Activated CD4-positive, alpha-beta memory T cell treated with anti-CD3 and anti-CD28 coated beads, Interleukin-2, amount 10 ng/mL, durations not matched to agents 7 days and 5 days (primary cell): ENCODE measurements at regions of chr17 and their contacts with region 1.

Region 1: GRCh38 chr17:38358586-38359513 is 7.2 kb downstream of the SOCS7 start:
- DNase-seq: no peak
- H3K4me3 Mint-ChIP-seq: no peak overlapping the region
- H3K27ac Mint-ChIP-seq: no peak overlapping the region
- H3K4me1 Mint-ChIP-seq: peaks cover 14% of the 10 kb centered on the region
- H3K27me3 Mint-ChIP-seq: no peaks in the 10 kb centered on the region

Region 2: GRCh38 chr17:38415250-38416194 is 56.7 kb after region 1 on chr17:
- CTCF ChIA-PET with region 1: interaction called, 10 read pairs
- POLR2A ChIA-PET with region 1: no interaction called
- DNase-seq: peak; percentile 26
- H3K4me3 Mint-ChIP-seq: peak overlapping the region; percentile 55
- H3K27ac Mint-ChIP-seq: peak overlapping the region; percentile 31
- H3K4me1 Mint-ChIP-seq: peaks cover 12% of the 10 kb centered on the region
- H3K27me3 Mint-ChIP-seq: peaks cover 33% of the 10 kb centered on the region

Region 3: DNA sequence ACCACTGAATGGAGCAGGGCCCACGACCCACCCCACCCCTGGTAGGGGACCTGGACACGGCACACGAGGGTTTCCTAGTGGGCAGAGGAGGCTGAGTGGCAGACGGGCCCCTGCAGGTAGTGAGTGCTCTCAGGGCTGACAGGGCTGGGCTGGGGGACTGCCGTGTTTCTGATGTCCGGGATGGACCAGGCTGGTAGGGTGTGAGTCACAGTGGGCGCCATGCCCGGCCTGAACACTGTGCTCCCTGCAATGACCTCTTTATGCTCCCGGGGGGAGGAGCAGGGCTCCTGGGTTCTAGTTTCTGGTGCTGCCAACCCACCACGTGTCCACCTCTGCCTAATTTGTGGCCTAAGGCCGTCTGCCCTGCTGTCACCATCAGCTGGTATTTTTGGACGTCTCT is 95.7 kb after region 1 on chr17:
- CTCF ChIA-PET with region 1: no interaction called
- POLR2A ChIA-PET with region 1: no interaction called
- DNase-seq: no peak
- H3K4me3 Mint-ChIP-seq: no peak overlapping the region
- H3K27ac Mint-ChIP-seq: no peak overlapping the region
- H3K4me1 Mint-ChIP-seq: peaks cover 9% of the 10 kb centered on the region
- H3K27me3 Mint-ChIP-seq: peaks cover 47% of the 10 kb centered on the region